ENCODE measurements at regions of chr5 and their contacts with region 1.

Region 1: DNA sequence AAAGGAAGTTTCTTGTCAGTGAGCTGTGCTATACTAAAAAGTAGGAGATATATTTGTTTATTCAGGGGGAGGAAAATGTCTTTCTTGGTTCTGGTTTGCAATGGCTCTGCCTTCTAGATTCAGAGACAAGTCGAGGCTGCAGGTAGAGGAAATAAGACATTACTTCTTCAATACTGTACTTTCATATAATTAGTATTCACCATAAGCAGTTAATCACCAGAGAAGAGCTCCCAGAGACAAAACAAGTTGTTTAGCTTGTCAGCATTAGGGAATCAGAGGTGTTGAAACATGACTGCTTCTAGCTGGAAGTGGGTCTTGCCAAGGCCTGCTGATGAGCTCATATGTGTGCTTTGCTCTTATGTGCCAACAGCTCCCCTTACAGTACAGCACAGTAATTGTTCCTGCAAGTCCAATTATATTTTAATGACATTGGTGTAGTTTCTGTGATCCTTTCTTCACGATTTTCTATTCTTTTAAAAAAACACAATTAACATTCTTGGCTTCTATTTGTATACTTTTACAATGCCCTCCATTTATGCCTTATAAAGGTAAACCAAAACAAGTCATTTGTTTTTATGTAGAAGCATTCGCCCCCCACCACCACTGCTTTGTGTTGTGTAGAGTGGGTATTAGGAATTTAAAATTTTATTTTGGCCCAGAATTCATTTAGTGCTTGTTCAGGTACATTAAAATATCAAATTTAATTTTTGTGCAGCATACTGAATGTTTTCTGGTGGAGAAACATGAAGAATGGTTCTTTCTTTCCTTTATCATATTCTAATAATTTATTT is 112.2 kb downstream of the RPS23 start:
- DNase-seq: peak; percentile 19 to 76 (median 45)
- ATAC-seq: peak; percentile 98
- H3K4me3 ChIP-seq: no peak overlapping the region
- H3K27ac ChIP-seq: peak overlapping the region; percentile 25; the same call in 1 of the 3 replicates
- H3K4me1 ChIP-seq: peaks cover 0 to 3% of the 10 kb centered on the region in 2 experiments; a peak in 2 of 5 replicates
- H3K27me3 ChIP-seq: no peaks in the 10 kb centered on the region
- CTCF ChIP-seq: peak; percentile 65 to 92 (median 78)
- EP300 ChIP-seq: no peak
- POLR2A ChIP-seq: no peak
- RAD21 ChIP-seq: peak; percentile 94 to 95

Region 2: DNA sequence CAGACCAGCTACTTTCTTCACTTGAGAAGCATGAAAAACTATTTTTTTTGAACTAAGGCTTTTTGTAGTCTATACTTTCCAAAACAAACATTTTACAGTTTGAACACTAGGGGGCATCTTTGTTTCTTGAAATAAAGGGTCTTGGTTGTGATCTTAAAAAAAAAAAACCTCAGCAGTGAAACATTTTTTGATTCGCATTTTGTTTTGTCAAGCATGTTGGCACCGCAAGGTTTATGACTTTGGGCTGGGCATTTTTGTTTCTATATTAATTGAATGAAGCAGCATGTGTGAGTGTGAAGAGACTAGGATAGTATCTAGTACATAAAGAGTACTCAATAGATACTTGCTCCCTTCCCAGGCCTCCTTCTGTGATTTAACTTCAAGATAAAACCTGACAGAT is 740.4 kb before region 1 on chr5:
- CTCF ChIA-PET with region 1: interaction called, 11 read pairs
- POLR2A ChIA-PET with region 1: no interaction called
- in situ Hi-C with region 1: no loop called
- intact Hi-C with region 1: loop called (anchors 2 kb)
- DNase-seq: peak; percentile 16 to 28 (median 19)
- ATAC-seq: peak; percentile 78
- H3K4me3 ChIP-seq: no peak overlapping the region
- H3K27ac ChIP-seq: no peak overlapping the region
- H3K4me1 ChIP-seq: peaks cover 0 to 3% of the 10 kb centered on the region in 2 experiments; a peak in 3 of 5 replicates
- H3K27me3 ChIP-seq: no peaks in the 10 kb centered on the region
- CTCF ChIP-seq: peak; percentile 46 to 66 (median 47); a peak in 4 of 6 replicates
- EP300 ChIP-seq: no peak
- POLR2A ChIP-seq: no peak
- RAD21 ChIP-seq: peak; percentile 66 to 70

Region 3: GRCh38 chr5:81506900-81507588 is 658.9 kb before region 1 on chr5:
- CTCF ChIA-PET with region 1: interaction called, 9 read pairs
- POLR2A ChIA-PET with region 1: no interaction called
- in situ Hi-C with region 1: loop called (anchors 25 kb)
- intact Hi-C with region 1: loop called (anchors 1 kb)
- DNase-seq: peak; percentile 30 to 83 (median 61)
- ATAC-seq: peak; percentile 100
- H3K4me3 ChIP-seq: no peak overlapping the region
- H3K27ac ChIP-seq: no peak overlapping the region; the same call in 2 of the 3 replicates
- H3K4me1 ChIP-seq: peaks cover 0 to 9% of the 10 kb centered on the region in 2 experiments; a peak in 2 of 5 replicates
- H3K27me3 ChIP-seq: no peaks in the 10 kb centered on the region
- CTCF ChIP-seq: peak; percentile 72 to 93 (median 80)
- EP300 ChIP-seq: no peak; the same call in 1 of the 2 replicates
- POLR2A ChIP-seq: no peak
- RAD21 ChIP-seq: peak; percentile 93 to 94

Region 4: DNA sequence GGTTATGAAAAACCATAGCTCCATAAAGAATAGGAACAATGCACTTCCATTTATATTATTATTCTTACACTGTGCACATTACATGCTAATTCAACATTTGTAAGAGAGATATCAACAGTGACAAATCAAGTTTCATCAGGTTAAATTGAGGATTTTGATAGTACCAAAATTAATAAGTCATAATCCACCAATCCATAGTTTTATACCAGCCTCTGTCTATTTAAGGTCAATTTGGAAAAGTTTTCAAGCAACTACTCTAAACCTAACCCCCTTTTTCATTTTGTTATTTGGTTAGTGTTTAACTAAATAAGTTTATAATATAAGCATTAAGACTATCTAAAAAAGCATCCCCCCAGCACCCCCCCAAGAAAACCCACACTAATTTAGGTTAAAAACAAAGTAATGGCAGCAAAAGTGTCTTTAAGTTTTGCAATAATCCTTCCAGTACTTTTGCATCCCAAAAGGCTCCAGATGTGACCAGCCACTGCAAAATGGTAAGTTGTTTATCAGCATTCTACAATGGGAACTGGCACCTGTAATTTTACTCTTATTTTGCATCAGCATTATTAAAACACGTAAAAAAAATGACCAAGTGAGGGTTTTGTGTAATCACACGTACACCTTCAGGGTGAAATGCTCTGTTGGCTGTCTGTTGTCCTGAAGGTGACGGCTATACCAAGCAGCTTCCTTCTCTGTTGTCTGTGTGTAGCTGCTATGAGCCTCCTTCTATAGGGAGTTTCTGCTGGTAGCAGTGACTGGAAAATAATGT is 378.3 kb before region 1 on chr5:
- CTCF ChIA-PET with region 1: no interaction called
- POLR2A ChIA-PET with region 1: no interaction called
- in situ Hi-C with region 1: no loop called
- intact Hi-C with region 1: loop called (anchors 2 kb)
- DNase-seq: peak in 1 of 4 experiments; percentile 27
- ATAC-seq: peak; percentile 68
- H3K4me3 ChIP-seq: no peak overlapping the region
- H3K27ac ChIP-seq: no peak overlapping the region
- H3K4me1 ChIP-seq: peaks cover 0 to 21% of the 10 kb centered on the region in 2 experiments; a peak in 4 of 5 replicates
- H3K27me3 ChIP-seq: no peaks in the 10 kb centered on the region
- CTCF ChIP-seq: no peak
- EP300 ChIP-seq: peak; percentile 18; the same call in 1 of the 2 replicates
- POLR2A ChIP-seq: no peak
- RAD21 ChIP-seq: no peak

Region 5: GRCh38 chr5:81971712-81972495 is 194.0 kb before region 1 on chr5 and contains the start of gene ATG10:
- CTCF ChIA-PET with region 1: no interaction called
- POLR2A ChIA-PET with region 1: no interaction called
- in situ Hi-C with region 1: no loop called
- intact Hi-C with region 1: loop called (anchors 5 kb)
- DNase-seq: peak; percentile 95 to 96 (median 96)
- ATAC-seq: peak; percentile 97
- H3K4me3 ChIP-seq: peak within 1 kb of the TSS; percentile 63
- H3K27ac ChIP-seq: peak within 1 kb of the TSS; percentile 97
- H3K4me1 ChIP-seq: peaks cover 8 to 10% of the 10 kb centered on the region in 2 experiments; a peak in 4 of 5 replicates
- H3K27me3 ChIP-seq: no peaks in the 10 kb centered on the region
- CTCF ChIP-seq: 0 out of 6 replicates have a peak, but pooled peaks of 1 of the 3 experiments have one; percentile 1
- EP300 ChIP-seq: no peak
- POLR2A ChIP-seq: peak; percentile 94
- RAD21 ChIP-seq: peak; percentile 24 to 33; a peak in 2 of 4 replicates
- polyA plus RNA-seq, gene ATG10: 14.6 to 15.0 TPM

Region 6: DNA sequence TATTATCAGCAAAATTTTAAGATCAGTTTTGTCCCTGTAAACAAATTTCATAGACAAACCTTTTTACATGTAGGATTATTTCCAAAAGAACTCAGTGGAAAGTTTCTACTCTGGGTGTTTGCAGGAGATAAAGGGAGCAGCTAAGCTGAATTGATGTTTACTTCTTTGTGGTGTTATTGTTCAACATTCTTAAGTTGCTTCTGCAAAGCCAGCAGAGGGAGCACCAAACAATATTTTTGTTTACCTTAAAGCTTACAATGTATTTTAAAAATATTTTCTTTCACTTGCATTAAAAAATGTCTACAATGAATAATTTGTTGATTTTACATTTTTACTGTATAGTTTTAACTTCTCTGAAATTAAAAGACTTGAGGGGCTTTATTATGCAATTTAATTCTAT is 58.7 kb before region 1 on chr5:
- CTCF ChIA-PET with region 1: interaction called, 4 read pairs
- POLR2A ChIA-PET with region 1: no interaction called
- in situ Hi-C with region 1: no loop called
- intact Hi-C with region 1: loop called (anchors 2 kb)
- DNase-seq: peak in 2 of 4 experiments; percentile 21 to 25
- ATAC-seq: peak; percentile 68
- H3K4me3 ChIP-seq: no peak overlapping the region
- H3K27ac ChIP-seq: peak overlapping the region; percentile 20; the same call in 1 of the 3 replicates
- H3K4me1 ChIP-seq: peaks cover 0 to 5% of the 10 kb centered on the region in 2 experiments; a peak in 3 of 5 replicates
- H3K27me3 ChIP-seq: no peaks in the 10 kb centered on the region
- CTCF ChIP-seq: peak in 2 of 3 experiments; percentile 46 to 62; a peak in 5 of 6 replicates
- EP300 ChIP-seq: no peak
- POLR2A ChIP-seq: no peak
- RAD21 ChIP-seq: peak; percentile 54 to 57

Region 7: GRCh38 chr5:82129723-82130285 is 36.1 kb before region 1 on chr5:
- CTCF ChIA-PET with region 1: no interaction called
- POLR2A ChIA-PET with region 1: no interaction called
- in situ Hi-C with region 1: no loop called
- intact Hi-C with region 1: no loop called
- DNase-seq: no peak
- ATAC-seq: no peak
- H3K4me3 ChIP-seq: no peak overlapping the region
- H3K27ac ChIP-seq: no peak overlapping the region
- H3K4me1 ChIP-seq: no peaks in the 10 kb centered on the region
- H3K27me3 ChIP-seq: no peaks in the 10 kb centered on the region
- CTCF ChIP-seq: no peak
- EP300 ChIP-seq: no peak
- POLR2A ChIP-seq: no peak
- RAD21 ChIP-seq: no peak

Measured in K562 (cell line).